Heart left ventricle (tissue), 16 donors: ENCODE measurements at regions of chr14 and their contacts with region 1.

Region 1: GRCh38 chr14:52124791-52125661 is 56.2 kb upstream of the NID2 start:
- DNase-seq: peak in 4 of 5 donors; percentile 26 to 40 (median 38)
- ATAC-seq: peak; percentile 26 to 87 (median 79)
- H3K4me3 ChIP-seq: peak overlapping the region in 1 of 12 donors; percentile 15
- H3K27ac ChIP-seq: peak overlapping the region in 10 of 12 donors; percentile 6 to 74 (median 62)
- H3K4me1 ChIP-seq: peaks cover 0 to 28% (median 14%) of the 10 kb centered on the region in 12 donors
- H3K27me3 ChIP-seq: no peaks in the 10 kb centered on the region
- CTCF ChIP-seq: no peak
- POLR2A ChIP-seq: no peak

Region 2: GRCh38 chr14:51759950-51760349 is 365.1 kb before region 1 on chr14:
- intact Hi-C with region 1: no loop called
- DNase-seq: no peak
- ATAC-seq: no peak
- H3K4me3 ChIP-seq: no peak overlapping the region
- H3K27ac ChIP-seq: no peak overlapping the region
- H3K4me1 ChIP-seq: no peaks in the 10 kb centered on the region
- H3K27me3 ChIP-seq: no peaks in the 10 kb centered on the region
- CTCF ChIP-seq: no peak
- POLR2A ChIP-seq: no peak

Region 3: DNA sequence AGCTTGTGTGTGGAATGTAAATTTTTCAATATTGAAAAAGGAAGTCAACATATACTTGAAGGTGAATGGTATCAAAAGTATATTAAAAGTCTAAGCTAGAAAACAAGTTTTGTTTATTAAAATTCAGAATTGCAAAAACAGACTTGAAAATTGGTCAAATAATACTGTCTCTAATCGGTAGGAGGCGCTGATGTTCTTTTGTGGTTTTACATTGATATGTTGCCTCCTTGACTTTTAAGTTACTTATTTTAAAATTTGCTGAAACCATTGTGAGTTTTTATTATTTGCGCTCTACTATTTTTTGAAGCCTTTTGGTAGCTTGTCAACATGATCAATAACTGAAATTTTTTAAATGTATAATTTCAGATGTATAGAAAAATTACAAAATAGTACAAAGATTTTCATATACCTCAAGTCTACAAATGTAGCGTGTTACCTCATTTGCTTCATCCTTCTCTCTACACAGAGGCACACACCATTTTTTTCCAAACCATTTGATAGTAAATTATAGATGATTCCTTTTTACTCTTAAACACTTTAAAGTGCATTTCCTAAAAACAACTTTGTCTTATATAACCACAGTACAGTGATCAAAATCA is 128.8 kb before region 1 on chr14:
- intact Hi-C with region 1: loop called in 2 of 10 experiments (anchors 5 kb)
- DNase-seq: no peak
- ATAC-seq: no peak
- H3K4me3 ChIP-seq: no peak overlapping the region
- H3K27ac ChIP-seq: no peak overlapping the region
- H3K4me1 ChIP-seq: peaks cover 0 to 57% (median 26%) of the 10 kb centered on the region in 12 donors
- H3K27me3 ChIP-seq: no peaks in the 10 kb centered on the region
- CTCF ChIP-seq: peak; percentile 72 to 94 (median 79)
- POLR2A ChIP-seq: no peak

Region 4: GRCh38 chr14:52080817-52081755 is 43.9 kb before region 1 on chr14:
- intact Hi-C with region 1: loop called in 4 of 10 experiments (anchors 5 to 10 kb)
- DNase-seq: no peak
- ATAC-seq: peak in 3 of 4 donors; percentile 55 to 68 (median 67)
- H3K4me3 ChIP-seq: no peak overlapping the region
- H3K27ac ChIP-seq: peak overlapping the region in 4 of 12 donors; percentile 12 to 35 (median 17)
- H3K4me1 ChIP-seq: peaks cover 0 to 38% (median 20%) of the 10 kb centered on the region in 12 donors
- H3K27me3 ChIP-seq: no peaks in the 10 kb centered on the region
- CTCF ChIP-seq: no peak
- POLR2A ChIP-seq: no peak

Region 5: GRCh38 chr14:52086711-52087110 is 38.3 kb before region 1 on chr14:
- intact Hi-C with region 1: loop called in 1 of 10 experiments (anchors 5 kb)
- DNase-seq: no peak
- ATAC-seq: no peak
- H3K4me3 ChIP-seq: no peak overlapping the region
- H3K27ac ChIP-seq: no peak overlapping the region
- H3K4me1 ChIP-seq: peaks cover 0 to 21% (median 5%) of the 10 kb centered on the region in 12 donors
- H3K27me3 ChIP-seq: no peaks in the 10 kb centered on the region
- CTCF ChIP-seq: no peak
- POLR2A ChIP-seq: no peak